ENCODE measurements at regions of chr15 and their contacts with region 1.

Region 1: GRCh38 chr15:36883713-36884517 is 216.4 kb downstream of the MEIS2 start:
- DNase-seq: peak; percentile 84 to 93 (median 86)
- ATAC-seq: peak; percentile 95
- H3K4me3 ChIP-seq: no peak overlapping the region
- H3K27ac ChIP-seq: no peak overlapping the region
- H3K4me1 ChIP-seq: peaks cover 9 to 11% of the 10 kb centered on the region in 2 donors
- H3K27me3 ChIP-seq: peaks cover 94 to 100% of the 10 kb centered on the region in 2 donors
- CTCF ChIP-seq: peak; percentile 76 to 79

Region 2: GRCh38 chr15:37019479-37020433 is 135.8 kb after region 1 on chr15:
- intact Hi-C with region 1: no loop called
- DNase-seq: peak in 3 of 4 donors; percentile 35 to 73 (median 61)
- ATAC-seq: peak; percentile 84
- H3K4me3 ChIP-seq: no peak overlapping the region
- H3K27ac ChIP-seq: peak overlapping the region; percentile 9 to 57
- H3K4me1 ChIP-seq: peaks cover 6 to 23% of the 10 kb centered on the region in 2 donors
- H3K27me3 ChIP-seq: no peaks in the 10 kb centered on the region
- CTCF ChIP-seq: no peak

Region 3: GRCh38 chr15:37106490-37107001 is 222.6 kb after region 1 on chr15:
- intact Hi-C with region 1: no loop called
- DNase-seq: peak in 1 of 4 donors; percentile 81
- ATAC-seq: no peak
- H3K4me3 ChIP-seq: peak overlapping the region in 1 of 2 donors; percentile 7
- H3K27ac ChIP-seq: no peak overlapping the region
- H3K4me1 ChIP-seq: peaks cover 0 to 3% of the 10 kb centered on the region in 2 donors
- H3K27me3 ChIP-seq: peaks cover 61 to 100% of the 10 kb centered on the region in 2 donors
- CTCF ChIP-seq: no peak

Region 4: DNA sequence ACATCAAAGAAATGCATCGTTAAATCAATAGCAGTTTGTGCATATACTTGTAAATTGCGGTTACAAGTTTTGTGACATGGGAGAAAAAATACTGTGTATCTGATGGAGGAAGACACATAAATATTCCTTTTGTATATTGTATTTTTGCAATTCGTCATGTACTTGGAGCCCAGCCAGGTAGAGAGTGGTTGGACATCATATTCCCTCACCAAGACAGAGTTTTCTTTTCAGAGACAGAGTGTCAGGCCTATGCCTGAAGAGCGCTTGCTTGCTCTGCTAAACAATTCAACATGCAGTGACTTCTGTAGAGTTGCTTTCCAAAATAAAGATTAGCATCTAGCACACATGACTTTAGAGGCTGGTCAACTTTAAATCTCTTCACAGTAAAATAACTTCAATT is 241.2 kb after region 1 on chr15:
- intact Hi-C with region 1: loop called in 1 of 2 experiments (anchors 5 kb)
- DNase-seq: no peak
- ATAC-seq: no peak
- H3K4me3 ChIP-seq: no peak overlapping the region
- H3K27ac ChIP-seq: no peak overlapping the region
- H3K4me1 ChIP-seq: no peaks in the 10 kb centered on the region
- H3K27me3 ChIP-seq: peaks cover 4 to 6% of the 10 kb centered on the region in 2 donors
- CTCF ChIP-seq: no peak